ENCODE measurements at regions of chr6 and their contacts with region 1.

Region 1: DNA sequence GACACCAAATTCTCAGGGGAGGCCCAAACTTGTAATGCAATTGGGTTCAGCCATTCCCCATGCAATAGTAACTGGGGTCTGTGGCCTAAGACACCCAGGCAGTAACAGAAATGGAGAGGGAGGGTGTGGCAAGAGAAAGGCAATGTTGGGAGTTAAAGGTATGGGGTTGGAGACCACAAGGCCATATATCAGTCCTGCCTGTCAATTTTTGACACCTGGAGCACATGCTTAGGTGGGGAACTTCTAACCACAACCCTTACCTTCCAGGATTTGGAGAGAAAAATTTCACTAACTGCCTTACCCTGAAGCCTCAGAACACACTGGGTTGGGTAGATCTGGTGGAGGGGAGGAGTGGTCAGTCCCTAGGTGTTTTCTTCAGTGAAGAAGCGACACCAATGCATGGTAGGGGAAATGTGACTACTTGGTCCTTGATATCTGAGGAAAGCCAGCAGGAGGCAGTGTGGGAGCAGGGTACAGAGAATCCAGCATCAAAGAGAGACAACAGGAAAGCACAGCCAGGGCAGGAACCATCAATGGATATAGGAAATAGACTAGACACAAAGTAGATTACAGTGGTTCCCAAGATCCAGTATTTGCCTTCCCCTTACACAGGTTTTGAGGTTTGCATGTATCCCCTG is 6.8 kb upstream of the USP49 start:
- DNase-seq: no peak
- ATAC-seq: no peak
- H3K4me3 ChIP-seq: no peak overlapping the region
- H3K27ac ChIP-seq: no peak overlapping the region
- H3K4me1 ChIP-seq: peaks cover 0 to 14% (median 2%) of the 10 kb centered on the region in 12 donors
- H3K27me3 ChIP-seq: no peaks in the 10 kb centered on the region
- CTCF ChIP-seq: peak in 6 of 12 donors; percentile 6 to 31 (median 15)
- POLR2A ChIP-seq: no peak

Region 2: GRCh38 chr6:41111036-41111435 is 791.0 kb before region 1 on chr6:
- intact Hi-C with region 1: no loop called
- DNase-seq: no peak
- ATAC-seq: no peak
- H3K4me3 ChIP-seq: no peak overlapping the region
- H3K27ac ChIP-seq: no peak overlapping the region
- H3K4me1 ChIP-seq: no peaks in the 10 kb centered on the region
- H3K27me3 ChIP-seq: no peaks in the 10 kb centered on the region
- CTCF ChIP-seq: no peak
- POLR2A ChIP-seq: no peak

Region 3: GRCh38 chr6:41887331-41887751 is 14.7 kb before region 1 on chr6:
- intact Hi-C with region 1: loop called in 1 of 10 experiments (anchors 2 kb)
- DNase-seq: no peak
- ATAC-seq: no peak
- H3K4me3 ChIP-seq: no peak overlapping the region
- H3K27ac ChIP-seq: no peak overlapping the region
- H3K4me1 ChIP-seq: no peaks in the 10 kb centered on the region
- H3K27me3 ChIP-seq: no peaks in the 10 kb centered on the region
- CTCF ChIP-seq: no peak
- POLR2A ChIP-seq: no peak

Region 4: DNA sequence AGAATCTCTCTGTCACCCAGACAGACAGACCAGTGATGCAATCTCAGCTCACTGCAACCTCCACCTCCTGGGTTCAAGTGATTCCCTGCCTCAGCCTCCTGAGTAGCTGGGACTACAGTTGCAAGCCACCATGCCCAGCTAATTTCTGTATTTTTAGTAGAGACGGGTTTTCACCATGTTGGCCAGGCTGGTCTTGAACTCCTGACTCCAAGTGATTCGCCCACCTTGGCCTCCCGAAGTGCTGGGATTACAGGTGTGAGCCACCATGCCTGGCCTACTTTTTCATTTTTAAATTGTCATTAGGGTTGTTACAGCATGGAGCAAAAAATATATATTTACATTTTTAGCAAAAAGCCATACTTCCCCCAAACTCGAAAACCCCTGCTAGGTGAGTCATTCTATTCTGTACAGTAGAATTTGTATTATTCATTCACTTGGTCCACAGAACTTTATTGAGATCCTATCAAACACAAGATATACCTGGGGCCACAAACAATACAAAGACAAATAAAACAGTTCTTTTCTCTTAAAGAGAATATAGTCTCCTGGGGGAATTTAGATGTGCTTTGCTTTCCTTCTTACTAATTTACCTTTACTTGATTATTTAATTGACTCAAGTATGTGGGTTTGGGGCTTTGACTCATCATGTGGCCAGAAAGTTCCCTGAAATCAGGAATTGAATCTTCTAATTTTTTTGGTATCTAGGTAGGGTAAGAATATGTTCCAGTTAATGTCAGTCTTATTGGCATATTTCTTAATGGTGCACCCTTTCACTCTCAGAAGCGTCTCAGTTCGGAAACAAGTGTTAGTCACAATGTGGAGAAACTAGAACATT is 56.2 kb after region 1 on chr6:
- intact Hi-C with region 1: no loop called
- DNase-seq: no peak
- ATAC-seq: no peak
- H3K4me3 ChIP-seq: no peak overlapping the region
- H3K27ac ChIP-seq: no peak overlapping the region
- H3K4me1 ChIP-seq: peaks cover 0 to 11% (median 0%) of the 10 kb centered on the region in 12 donors
- H3K27me3 ChIP-seq: no peaks in the 10 kb centered on the region
- CTCF ChIP-seq: no peak
- POLR2A ChIP-seq: no peak